ENCODE measurements at regions of chr4 and their contacts with region 1.

Region 1: DNA sequence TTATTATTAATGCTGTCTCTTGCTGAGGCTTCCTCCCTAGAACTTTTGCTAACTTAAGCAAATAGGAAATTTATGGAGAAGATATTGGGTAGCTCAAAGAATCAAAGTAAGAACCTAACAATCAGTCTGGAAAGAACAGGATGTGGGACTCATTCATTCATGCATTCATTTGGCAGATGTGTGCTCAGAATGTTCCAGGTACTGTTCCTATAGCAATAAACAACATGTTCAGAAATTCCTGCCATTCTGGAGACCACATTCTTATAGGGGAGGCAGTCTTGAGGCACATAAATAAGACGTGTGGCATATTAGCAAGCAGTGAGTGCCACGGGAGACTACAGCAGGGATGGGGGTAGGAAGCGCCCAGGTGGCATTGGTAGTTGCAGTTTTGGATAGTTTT is 5.0 kb downstream of the GRK4 start:
- DNase-seq: no peak
- ATAC-seq: no peak
- H3K4me3 ChIP-seq: no peak overlapping the region
- H3K27ac ChIP-seq: no peak overlapping the region
- H3K4me1 ChIP-seq: peaks cover 6% of the 10 kb centered on the region
- H3K27me3 ChIP-seq: no peaks in the 10 kb centered on the region
- CTCF ChIP-seq: no peak

Region 2: GRCh38 chr4:3030546-3031356 is 62.4 kb after region 1 on chr4:
- intact Hi-C with region 1: no loop called
- DNase-seq: no peak
- ATAC-seq: no peak
- H3K4me3 ChIP-seq: no peak overlapping the region
- H3K27ac ChIP-seq: no peak overlapping the region
- H3K4me1 ChIP-seq: no peaks in the 10 kb centered on the region
- H3K27me3 ChIP-seq: no peaks in the 10 kb centered on the region
- CTCF ChIP-seq: no peak

Region 3: DNA sequence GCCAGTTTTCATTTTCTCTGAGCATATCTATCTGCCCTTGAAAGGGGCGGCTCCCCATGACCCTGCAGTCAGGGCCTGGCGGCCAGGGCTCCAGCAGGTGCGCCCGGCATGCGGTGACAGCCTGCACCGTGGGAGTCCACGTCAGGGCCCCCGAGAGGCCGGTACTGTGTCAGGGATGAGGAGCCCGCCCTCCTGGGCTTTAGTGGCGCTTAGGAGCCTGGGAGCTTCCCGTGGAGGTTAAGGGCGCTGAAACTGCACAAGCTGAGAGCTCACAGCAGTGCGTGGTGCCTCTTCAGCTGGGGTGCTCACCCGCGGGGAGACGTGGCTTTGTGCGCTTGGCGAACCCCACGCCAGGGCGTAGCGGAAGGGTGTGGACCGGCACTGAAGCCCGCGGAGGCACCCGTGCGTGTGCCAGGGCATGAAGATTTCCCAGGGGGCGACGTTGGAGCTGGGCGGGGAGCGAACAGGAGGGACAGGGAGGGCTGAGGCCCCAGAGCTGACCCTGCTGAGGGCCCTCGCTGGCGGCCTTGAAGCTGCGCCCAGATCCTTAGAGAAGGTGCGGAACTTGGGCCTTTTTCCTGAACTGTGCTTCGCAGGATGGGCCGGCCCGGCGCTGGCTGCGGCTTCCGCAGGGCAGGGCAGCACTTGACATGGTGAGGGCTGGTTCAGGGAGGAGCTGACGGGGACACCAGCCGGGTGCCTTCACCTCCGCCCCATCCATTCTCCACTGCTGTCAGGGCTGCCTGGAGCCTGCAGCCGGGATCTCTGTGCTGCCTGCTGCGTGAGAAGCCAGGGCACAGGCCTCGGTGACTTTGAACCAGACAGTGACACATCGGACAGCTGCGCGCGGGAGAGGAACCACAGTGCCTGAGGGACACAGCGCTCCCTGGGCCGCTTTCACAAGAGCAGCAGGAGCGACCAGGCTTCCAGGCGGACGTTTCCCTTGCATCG is 73.1 kb after region 1 on chr4:
- intact Hi-C with region 1: loop called in 1 of 2 experiments (anchors 5 kb)
- DNase-seq: peak; percentile 86 to 94
- ATAC-seq: peak; percentile 93 to 95 (median 94)
- H3K4me3 ChIP-seq: peak overlapping the region; percentile 75
- H3K27ac ChIP-seq: peak overlapping the region; percentile 81
- H3K4me1 ChIP-seq: peaks cover 8% of the 10 kb centered on the region
- H3K27me3 ChIP-seq: no peaks in the 10 kb centered on the region
- CTCF ChIP-seq: no peak

Region 4: DNA sequence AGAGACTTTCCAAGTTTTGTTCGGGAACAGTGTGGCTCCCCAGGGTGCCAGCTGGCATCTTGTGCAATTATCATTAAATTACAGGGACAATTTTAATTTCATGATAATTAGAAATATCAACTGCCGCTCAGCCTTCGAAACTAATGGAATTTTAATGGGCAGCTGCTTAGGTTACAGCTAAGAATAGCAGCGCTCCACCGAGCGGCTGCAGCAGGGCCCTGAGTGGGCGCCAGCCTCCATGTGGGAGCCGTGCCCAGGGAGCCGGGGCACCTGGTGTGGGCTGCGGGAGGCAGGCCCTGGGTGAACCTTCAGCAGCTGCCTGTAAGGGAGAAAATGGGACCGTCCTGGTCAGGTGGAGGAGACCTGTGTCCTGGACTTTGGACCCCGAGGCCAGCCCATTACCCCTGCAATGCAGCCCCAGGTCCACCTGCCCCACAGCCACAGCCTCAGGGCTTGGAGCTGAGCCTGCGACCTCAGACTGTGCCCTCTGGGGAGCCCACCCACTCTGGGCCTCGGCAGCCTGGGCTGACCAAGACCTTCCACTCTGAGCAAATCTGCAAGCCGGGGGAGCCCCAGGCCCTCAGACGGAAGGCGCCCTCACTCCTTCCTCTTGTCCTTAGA is 301.7 kb after region 1 on chr4:
- intact Hi-C with region 1: no loop called
- DNase-seq: peak; percentile 63 to 88
- ATAC-seq: peak; percentile 95 to 100 (median 98)
- H3K4me3 ChIP-seq: peak overlapping the region; percentile 39
- H3K27ac ChIP-seq: peak overlapping the region; percentile 65
- H3K4me1 ChIP-seq: peaks cover 15% of the 10 kb centered on the region
- H3K27me3 ChIP-seq: no peaks in the 10 kb centered on the region
- CTCF ChIP-seq: no peak

Measured in psoas muscle (tissue), 8 donors.